ENCODE measurements at regions of chr2 and their contacts with region 1.

Region 1: DNA sequence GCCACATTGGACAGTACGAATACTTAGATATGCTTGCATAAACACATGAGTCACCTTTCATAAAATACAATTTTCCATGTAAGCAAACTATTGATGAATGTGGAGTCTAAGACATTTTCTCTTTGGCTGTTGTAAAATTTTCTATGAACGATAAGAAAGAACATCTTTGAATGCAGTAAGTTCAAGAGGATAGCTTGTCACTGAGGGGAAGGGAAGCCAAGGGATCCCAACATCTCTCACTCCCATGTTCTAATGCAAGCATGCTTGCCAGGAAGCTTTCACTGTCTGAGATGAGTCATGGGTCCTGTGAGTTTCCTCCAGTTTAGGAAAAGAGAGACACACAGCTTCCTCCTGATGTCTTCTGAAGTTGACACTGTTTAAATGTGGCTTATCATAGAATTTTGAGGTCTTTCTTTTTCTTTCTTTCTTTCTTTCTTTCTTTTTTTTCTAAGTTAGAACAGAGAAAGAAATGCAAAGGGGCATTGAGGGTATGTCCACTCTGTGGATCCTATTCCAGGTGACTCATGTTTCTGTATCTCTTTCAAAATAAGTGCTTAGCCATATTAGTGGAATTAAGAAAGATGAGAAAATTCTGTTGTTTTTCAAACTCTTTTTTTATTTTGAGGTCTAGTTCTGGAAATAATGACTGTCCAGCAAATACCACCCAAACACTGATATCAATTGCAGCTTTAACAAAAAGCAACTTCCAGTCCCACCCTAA is 146.6 kb downstream of the RDH14 start:
- DNase-seq: peak; percentile 41
- H3K4me3 ChIP-seq: peak overlapping the region; percentile 1; the same call in 1 of the 2 replicates
- H3K27ac ChIP-seq: peak overlapping the region; percentile 47
- H3K27me3 ChIP-seq: no peaks in the 10 kb centered on the region
- CTCF ChIP-seq: no peak

Region 2: DNA sequence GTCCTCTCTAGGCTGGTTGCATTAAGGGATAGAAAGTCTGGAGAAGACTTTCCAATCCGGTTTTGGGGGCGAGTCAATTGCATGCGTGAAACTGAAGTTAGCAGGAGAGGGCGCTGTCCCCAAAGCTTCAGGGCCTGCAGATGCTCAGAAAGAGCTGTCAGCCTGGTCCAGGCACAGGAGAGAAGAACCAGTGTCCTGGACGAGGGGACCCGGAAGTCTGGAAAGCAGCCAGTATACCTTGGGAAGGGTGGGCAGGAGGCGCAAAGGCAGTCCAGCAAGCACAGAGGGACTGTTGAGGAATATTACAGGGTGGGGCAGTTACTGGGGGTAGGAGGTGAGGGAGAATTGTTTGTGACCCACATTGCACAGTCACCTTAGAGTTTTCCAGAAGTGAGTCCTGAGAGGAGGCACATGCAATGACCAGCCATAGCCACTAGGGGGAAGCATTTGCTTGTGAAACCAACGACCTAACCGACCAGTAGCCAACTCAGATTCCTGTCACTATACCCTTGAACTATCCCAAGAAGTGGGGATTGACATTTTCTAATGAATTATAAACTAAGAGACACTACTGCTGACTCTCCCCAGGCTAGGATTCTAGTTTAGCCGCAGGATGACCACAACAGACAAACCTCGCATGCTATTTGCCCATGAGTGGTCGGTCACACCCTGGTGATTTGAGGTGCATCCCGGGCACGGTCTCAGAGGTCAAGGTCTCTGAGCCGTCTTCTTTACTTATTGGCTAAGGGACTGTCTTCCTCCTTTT is 26.2 kb before region 1 on chr2:
- CTCF ChIA-PET with region 1: interaction called, 14 read pairs
- POLR2A ChIA-PET with region 1: no interaction called
- DNase-seq: peak; percentile 48
- H3K4me3 ChIP-seq: no peak overlapping the region
- H3K27ac ChIP-seq: no peak overlapping the region
- H3K27me3 ChIP-seq: no peaks in the 10 kb centered on the region
- CTCF ChIP-seq: peak; percentile 96

Region 3: GRCh38 chr2:18455236-18455862 is 41.5 kb after region 1 on chr2:
- CTCF ChIA-PET with region 1: interaction called, 10 read pairs
- POLR2A ChIA-PET with region 1: no interaction called
- DNase-seq: peak; percentile 39
- H3K4me3 ChIP-seq: no peak overlapping the region
- H3K27ac ChIP-seq: peak overlapping the region; percentile 73
- H3K27me3 ChIP-seq: no peaks in the 10 kb centered on the region
- CTCF ChIP-seq: peak; percentile 53

Measured in AG04450 (cell line).